Endothelial cell of umbilical vein (primary cell): ENCODE measurements at regions of chr1 and their contacts with region 1.

Region 1: GRCh38 chr1:151510957-151511635 is at the start of gene CGN:
- DNase-seq: peak; percentile 89
- H3K4me3 ChIP-seq: peak within 1 kb of the TSS; percentile 29 to 44 (median 38)
- H3K27ac ChIP-seq: no peak within 1 kb of the TSS
- H3K4me1 ChIP-seq: peaks cover 12% of the 10 kb centered on the region
- H3K27me3 ChIP-seq: peaks cover 0 to 2% of the 10 kb centered on the region in 2 experiments
- CTCF ChIP-seq: no peak
- POLR2A ChIP-seq: no peak
- total RNA-seq, gene CGN: 0.73 and 1.2 TPM in 2 replicates

Region 2: GRCh38 chr1:151472856-151473731 is 38.0 kb before region 1 on chr1:
- CTCF ChIA-PET with region 1: no interaction called
- POLR2A ChIA-PET with region 1: no interaction called
- dilution Hi-C with region 1: no loop called
- intact Hi-C with region 1: loop called (anchors 1 kb)
- DNase-seq: peak; percentile 52
- H3K4me3 ChIP-seq: peak overlapping the region; percentile 40 to 64 (median 41)
- H3K27ac ChIP-seq: no peak overlapping the region
- H3K4me1 ChIP-seq: peaks cover 2% of the 10 kb centered on the region
- H3K27me3 ChIP-seq: no peaks in the 10 kb centered on the region
- CTCF ChIP-seq: no peak
- POLR2A ChIP-seq: peak; percentile 39

Region 3: DNA sequence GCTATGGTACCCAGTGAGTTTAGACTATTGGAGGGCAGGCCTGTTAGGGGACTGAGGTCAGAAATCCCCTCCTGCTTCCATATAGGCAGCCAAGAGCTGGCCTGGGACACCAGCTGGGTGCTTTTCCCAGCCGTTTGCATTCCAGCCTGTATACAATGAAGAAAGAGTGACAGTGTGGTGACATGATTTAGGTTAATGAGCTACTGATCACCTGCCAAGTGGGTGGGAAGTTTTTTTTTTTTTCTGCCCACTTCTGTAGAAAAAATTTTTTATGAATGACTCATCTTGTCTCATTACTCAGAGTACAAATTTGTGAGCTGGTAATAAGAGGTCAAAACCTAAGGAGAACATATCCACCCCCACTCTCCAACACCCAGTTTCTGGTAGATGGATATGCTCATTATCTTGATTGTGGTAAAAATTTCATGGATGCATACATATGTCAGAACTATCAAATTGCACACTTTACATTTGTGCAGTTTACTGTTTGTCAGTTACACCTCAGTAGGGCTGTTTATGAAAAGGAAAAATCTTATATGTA is 16.3 kb before region 1 on chr1:
- CTCF ChIA-PET with region 1: interaction called, 4 read pairs
- POLR2A ChIA-PET with region 1: no interaction called
- dilution Hi-C with region 1: no loop called
- intact Hi-C with region 1: loop called (anchors 1 kb)
- DNase-seq: peak; percentile 86
- H3K4me3 ChIP-seq: no peak overlapping the region
- H3K27ac ChIP-seq: peak overlapping the region; percentile 22
- H3K4me1 ChIP-seq: peaks cover 13% of the 10 kb centered on the region
- H3K27me3 ChIP-seq: peaks cover 0 to under 1% of the 10 kb centered on the region in 2 experiments
- CTCF ChIP-seq: no peak
- POLR2A ChIP-seq: no peak